SK-N-SH (cell line): ENCODE measurements at regions of chr3 and their contacts with region 1.

Region 1: GRCh38 chr3:51682079-51682478 is 11.0 kb downstream of the TEX264 start:
- DNase-seq: peak; percentile 92
- H3K4me3 ChIP-seq: no peak overlapping the region
- H3K27ac ChIP-seq: peak overlapping the region; percentile 36 to 75; a peak in 3 of 4 replicates
- H3K4me1 ChIP-seq: peaks cover 4 to 11% of the 10 kb centered on the region in 2 experiments; a peak in 2 of 4 replicates
- H3K27me3 ChIP-seq: no peaks in the 10 kb centered on the region
- CTCF ChIP-seq: peak; percentile 79
- EP300 ChIP-seq: peak in 1 of 2 experiments; percentile 56; a peak in 2 of 4 replicates
- RAD21 ChIP-seq: peak; percentile 96

Region 2: GRCh38 chr3:51498876-51499738 is 183.0 kb before region 1 on chr3:
- CTCF ChIA-PET with region 1: interaction called, 125 read pairs
- POLR2A ChIA-PET with region 1: interaction called, 5 read pairs
- DNase-seq: peak; percentile 88
- H3K4me3 ChIP-seq: peak overlapping the region; percentile 52 to 75
- H3K27ac ChIP-seq: peak overlapping the region; percentile 85 to 90
- H3K4me1 ChIP-seq: peaks cover 0 to 4% of the 10 kb centered on the region in 2 experiments; a peak in 2 of 4 replicates
- H3K27me3 ChIP-seq: no peaks in the 10 kb centered on the region
- CTCF ChIP-seq: no peak
- EP300 ChIP-seq: no peak
- RAD21 ChIP-seq: no peak

Region 3: GRCh38 chr3:51646091-51646490 is 36.0 kb before region 1 on chr3:
- CTCF ChIA-PET with region 1: interaction called, 32 read pairs
- POLR2A ChIA-PET with region 1: no interaction called
- DNase-seq: no peak
- H3K4me3 ChIP-seq: no peak overlapping the region
- H3K27ac ChIP-seq: no peak overlapping the region
- H3K4me1 ChIP-seq: no peaks in the 10 kb centered on the region
- H3K27me3 ChIP-seq: no peaks in the 10 kb centered on the region
- CTCF ChIP-seq: no peak
- EP300 ChIP-seq: no peak
- RAD21 ChIP-seq: no peak

Region 4: DNA sequence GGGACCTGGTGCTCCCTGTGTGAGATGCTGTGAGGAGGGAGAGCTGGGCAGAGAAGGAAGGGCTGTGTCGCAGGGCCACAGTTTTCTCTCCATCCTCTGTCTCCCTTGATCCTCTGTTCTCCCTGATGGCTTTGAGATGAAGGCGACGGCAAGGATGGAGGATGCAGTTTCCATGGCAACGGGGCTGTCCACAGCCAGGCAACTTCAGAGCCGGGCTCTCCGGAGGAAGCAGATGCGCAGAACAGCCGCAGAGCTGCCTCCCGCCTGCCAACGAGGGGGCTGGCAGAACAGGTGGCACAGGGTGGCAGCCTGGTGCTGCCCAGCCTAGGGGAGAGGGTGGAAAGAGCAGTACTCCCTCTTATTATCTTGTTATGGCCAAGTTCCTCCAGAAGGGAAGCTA is 14.9 kb after region 1 on chr3:
- CTCF ChIA-PET with region 1: interaction called, 50 read pairs
- POLR2A ChIA-PET with region 1: no interaction called
- DNase-seq: peak; percentile 74
- H3K4me3 ChIP-seq: no peak overlapping the region
- H3K27ac ChIP-seq: no peak overlapping the region
- H3K4me1 ChIP-seq: no peaks in the 10 kb centered on the region; a peak in 1 of 4 replicates
- H3K27me3 ChIP-seq: no peaks in the 10 kb centered on the region
- CTCF ChIP-seq: no peak
- EP300 ChIP-seq: no peak
- RAD21 ChIP-seq: no peak

Region 5: GRCh38 chr3:51830836-51831385 is 148.8 kb after region 1 on chr3:
- CTCF ChIA-PET with region 1: no interaction called
- POLR2A ChIA-PET with region 1: no interaction called
- DNase-seq: no peak
- H3K4me3 ChIP-seq: no peak overlapping the region
- H3K27ac ChIP-seq: no peak overlapping the region
- H3K4me1 ChIP-seq: peaks cover 0 to 4% of the 10 kb centered on the region in 2 experiments; a peak in 1 of 4 replicates
- H3K27me3 ChIP-seq: no peaks in the 10 kb centered on the region
- CTCF ChIP-seq: no peak
- EP300 ChIP-seq: no peak
- RAD21 ChIP-seq: no peak